CD8-positive, alpha-beta T cell (primary cell): ENCODE measurements at regions of chr3 and their contacts with region 1.

Region 1: DNA sequence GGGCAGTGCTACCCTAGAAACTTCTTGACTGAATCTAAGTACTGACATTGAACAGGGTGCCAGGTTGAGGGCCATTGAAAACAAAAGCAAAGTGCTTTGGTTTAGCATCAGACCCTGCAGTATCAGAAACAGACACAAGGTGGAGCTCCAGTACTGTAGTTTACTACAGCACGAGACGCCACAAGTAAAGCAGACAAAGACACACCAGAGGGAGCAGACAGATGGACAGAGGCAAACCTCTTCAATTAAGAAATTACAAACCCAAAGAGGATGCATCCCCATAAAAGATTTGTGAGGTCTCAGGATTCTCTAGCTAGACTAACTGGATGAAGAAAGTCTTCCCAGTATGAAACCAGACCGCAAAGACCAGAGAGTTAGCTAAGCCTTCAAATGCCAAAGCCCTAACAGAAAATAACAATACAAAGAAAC is 16.6 kb downstream of the TOP2B start:
- DNase-seq: peak; percentile 69 to 89 (median 83)
- ATAC-seq: peak; percentile 99
- H3K4me3 ChIP-seq: no peak overlapping the region
- H3K4me3 Mint-ChIP-seq: no peak overlapping the region
- H3K27ac ChIP-seq: no peak overlapping the region
- H3K27ac Mint-ChIP-seq: peak overlapping the region; percentile 19
- H3K4me1 ChIP-seq: peaks cover 2% of the 10 kb centered on the region
- H3K4me1 Mint-ChIP-seq: peaks cover 56% of the 10 kb centered on the region
- H3K27me3 ChIP-seq: no peaks in the 10 kb centered on the region
- H3K27me3 Mint-ChIP-seq: no peaks in the 10 kb centered on the region
- CTCF ChIP-seq: peak; percentile 93

Region 2: GRCh38 chr3:25664810-25665314 is 16.7 kb after region 1 on chr3 and contains the start of gene TOP2B:
- CTCF ChIA-PET with region 1: interaction called, 27 read pairs
- POLR2A ChIA-PET with region 1: interaction called, 7 read pairs
- intact Hi-C with region 1: loop called (anchors 1 to 2 kb)
- DNase-seq: peak; percentile 91 to 97 (median 95)
- ATAC-seq: peak; percentile 88
- H3K4me3 ChIP-seq: peak within 1 kb of the TSS; percentile 69 to 84
- H3K4me3 Mint-ChIP-seq: peak within 1 kb of the TSS; percentile 98
- H3K27ac ChIP-seq: peak within 1 kb of the TSS; percentile 86 to 94
- H3K27ac Mint-ChIP-seq: peak within 1 kb of the TSS; percentile 100
- H3K4me1 ChIP-seq: peaks cover 36% of the 10 kb centered on the region
- H3K4me1 Mint-ChIP-seq: peaks cover 49% of the 10 kb centered on the region
- H3K27me3 ChIP-seq: no peaks in the 10 kb centered on the region
- H3K27me3 Mint-ChIP-seq: no peaks in the 10 kb centered on the region
- CTCF ChIP-seq: no peak
- total RNA-seq, gene TOP2B: 71.8 to 74.7 TPM

Region 3: GRCh38 chr3:25751725-25752124 is 103.6 kb after region 1 on chr3:
- CTCF ChIA-PET with region 1: interaction called, 11 read pairs
- POLR2A ChIA-PET with region 1: no interaction called
- intact Hi-C with region 1: no loop called
- DNase-seq: no peak
- ATAC-seq: no peak
- H3K4me3 ChIP-seq: no peak overlapping the region
- H3K4me3 Mint-ChIP-seq: no peak overlapping the region
- H3K27ac ChIP-seq: no peak overlapping the region
- H3K27ac Mint-ChIP-seq: peak overlapping the region; percentile 49
- H3K4me1 ChIP-seq: no peaks in the 10 kb centered on the region
- H3K4me1 Mint-ChIP-seq: peaks cover 25% of the 10 kb centered on the region
- H3K27me3 ChIP-seq: no peaks in the 10 kb centered on the region
- H3K27me3 Mint-ChIP-seq: no peaks in the 10 kb centered on the region
- CTCF ChIP-seq: no peak

Region 4: GRCh38 chr3:25789596-25790556 is 141.8 kb after region 1 on chr3 and contains the start of gene OXSM:
- CTCF ChIA-PET with region 1: interaction called, 13 read pairs
- POLR2A ChIA-PET with region 1: no interaction called
- intact Hi-C with region 1: no loop called
- DNase-seq: peak; percentile 75 to 98 (median 89)
- ATAC-seq: peak; percentile 93
- H3K4me3 ChIP-seq: peak within 1 kb of the TSS; percentile 64 to 65
- H3K4me3 Mint-ChIP-seq: peak within 1 kb of the TSS; percentile 97
- H3K27ac ChIP-seq: peak within 1 kb of the TSS; percentile 85 to 87
- H3K27ac Mint-ChIP-seq: peak within 1 kb of the TSS; percentile 98
- H3K4me1 ChIP-seq: peaks cover 18% of the 10 kb centered on the region
- H3K4me1 Mint-ChIP-seq: peaks cover 54% of the 10 kb centered on the region
- H3K27me3 ChIP-seq: no peaks in the 10 kb centered on the region
- H3K27me3 Mint-ChIP-seq: no peaks in the 10 kb centered on the region
- CTCF ChIP-seq: no peak
- total RNA-seq, gene OXSM: 4.0 to 5.9 TPM

Region 5: DNA sequence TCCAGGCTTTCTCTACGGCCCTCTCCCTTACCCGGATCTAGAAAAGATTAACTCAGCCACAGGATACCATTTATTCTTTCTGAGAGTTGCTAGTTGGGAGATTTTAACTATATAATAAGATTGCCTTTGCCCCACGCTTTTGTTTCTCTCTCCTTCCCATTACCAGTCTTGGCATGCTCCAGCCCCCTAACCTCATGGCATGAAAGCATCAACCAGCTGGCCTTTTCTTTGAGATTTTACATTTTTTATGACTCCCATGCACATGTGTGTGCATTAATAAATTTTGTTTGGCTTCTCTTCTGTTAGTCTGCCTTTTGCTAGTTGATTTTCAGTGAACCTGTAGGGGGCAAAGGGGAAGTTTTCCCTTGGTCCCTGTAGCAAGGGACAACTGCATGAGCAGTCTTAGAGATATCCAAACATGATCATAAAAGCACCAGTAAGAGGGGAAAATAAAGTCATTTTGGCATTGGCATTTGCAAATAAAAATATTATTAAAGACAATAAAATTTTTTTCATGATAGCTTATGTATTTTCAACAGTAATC is 215.4 kb after region 1 on chr3:
- CTCF ChIA-PET with region 1: interaction called, 117 read pairs
- POLR2A ChIA-PET with region 1: no interaction called
- intact Hi-C with region 1: no loop called
- DNase-seq: no peak
- ATAC-seq: no peak
- H3K4me3 ChIP-seq: no peak overlapping the region
- H3K4me3 Mint-ChIP-seq: no peak overlapping the region
- H3K27ac ChIP-seq: no peak overlapping the region
- H3K27ac Mint-ChIP-seq: no peak overlapping the region
- H3K4me1 ChIP-seq: no peaks in the 10 kb centered on the region
- H3K4me1 Mint-ChIP-seq: no peaks in the 10 kb centered on the region
- H3K27me3 ChIP-seq: no peaks in the 10 kb centered on the region
- H3K27me3 Mint-ChIP-seq: no peaks in the 10 kb centered on the region
- CTCF ChIP-seq: no peak